A673 (cell line): ENCODE measurements at regions of chr6 and their contacts with region 1.

Region 1: GRCh38 chr6:47097092-47097945 is 55.2 kb upstream of the ADGRF1 start:
- DNase-seq: peak; percentile 92
- H3K4me3 ChIP-seq: no peak overlapping the region
- H3K27ac ChIP-seq: no peak overlapping the region
- H3K4me1 ChIP-seq: peaks cover 10% of the 10 kb centered on the region
- H3K27me3 ChIP-seq: no peaks in the 10 kb centered on the region
- CTCF ChIP-seq: peak; percentile 80

Region 2: GRCh38 chr6:47309291-47310130 is 212.2 kb after region 1 on chr6 and contains the start of gene TNFRSF21:
- CTCF ChIA-PET with region 1: no interaction called
- POLR2A ChIA-PET with region 1: no interaction called
- intact Hi-C with region 1: loop called (anchors 1 kb)
- DNase-seq: peak; percentile 94
- H3K4me3 ChIP-seq: peak within 1 kb of the TSS; percentile 67
- H3K27ac ChIP-seq: peak within 1 kb of the TSS; percentile 69
- H3K4me1 ChIP-seq: peaks cover 5% of the 10 kb centered on the region
- H3K27me3 ChIP-seq: peaks cover 3% of the 10 kb centered on the region
- CTCF ChIP-seq: peak; percentile 94
- total RNA-seq, gene TNFRSF21: 31.3 and 36.0 TPM in 2 replicates